ENCODE measurements at regions of chr20 and their contacts with region 1.

Region 1: DNA sequence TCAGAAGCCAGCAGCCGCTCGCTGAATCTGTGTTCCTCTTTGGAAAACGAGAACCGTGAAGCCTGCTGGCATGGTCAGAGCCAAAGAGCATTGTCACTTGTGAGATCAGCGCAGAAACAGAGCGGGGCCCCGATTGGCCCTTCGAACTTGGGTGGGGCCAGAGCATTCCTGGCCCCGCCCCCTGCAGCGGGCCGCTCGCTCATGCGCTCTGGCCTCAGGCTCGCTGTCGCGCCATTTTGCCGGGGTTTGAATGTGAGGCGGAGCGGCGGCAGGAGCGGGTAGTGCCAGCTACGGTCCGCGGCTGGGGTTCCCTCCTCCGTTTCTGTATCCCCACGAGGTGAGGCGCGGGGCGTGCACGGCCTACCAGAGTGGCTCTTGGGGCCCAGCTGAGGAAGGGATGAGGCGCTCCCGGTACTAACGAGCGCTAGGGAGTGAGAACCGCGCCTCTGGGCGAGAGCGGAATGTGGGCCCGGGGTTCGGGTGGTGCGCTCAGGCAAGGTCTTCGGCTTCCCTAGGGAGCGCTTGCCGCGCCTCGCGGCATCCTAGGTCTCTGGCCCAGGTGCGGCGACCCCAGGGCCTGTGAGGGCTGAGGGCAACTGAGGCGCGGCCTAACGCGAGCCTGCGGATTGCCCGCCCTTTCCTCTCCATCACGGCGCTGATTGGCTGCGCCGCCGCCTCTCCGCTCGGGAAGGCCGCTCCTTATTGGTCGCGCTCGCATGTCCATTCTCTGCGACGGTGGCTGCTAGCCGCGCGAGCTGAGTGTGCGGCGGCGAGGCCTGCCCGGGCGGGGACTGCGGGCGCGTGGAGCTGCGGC is at the start of gene CSE1L:
- DNase-seq: peak; percentile 97
- ATAC-seq: peak; percentile 85
- H3K4me3 ChIP-seq: peak within 1 kb of the TSS; percentile 83 to 100 (median 99)
- H3K4me3 Mint-ChIP-seq: peak within 1 kb of the TSS; percentile 96
- H3K27ac ChIP-seq: peak within 1 kb of the TSS; percentile 78 to 97
- H3K27ac Mint-ChIP-seq: peak within 1 kb of the TSS; percentile 98
- H3K4me1 ChIP-seq: peaks cover 14 to 24% of the 10 kb centered on the region in 2 donors
- H3K4me1 Mint-ChIP-seq: peaks cover 28% of the 10 kb centered on the region
- H3K27me3 ChIP-seq: no peaks in the 10 kb centered on the region
- H3K27me3 Mint-ChIP-seq: no peaks in the 10 kb centered on the region
- CTCF ChIP-seq: no peak
- total RNA-seq, gene CSE1L: 38.0 and 38.5 TPM in 2 replicates

Region 2: DNA sequence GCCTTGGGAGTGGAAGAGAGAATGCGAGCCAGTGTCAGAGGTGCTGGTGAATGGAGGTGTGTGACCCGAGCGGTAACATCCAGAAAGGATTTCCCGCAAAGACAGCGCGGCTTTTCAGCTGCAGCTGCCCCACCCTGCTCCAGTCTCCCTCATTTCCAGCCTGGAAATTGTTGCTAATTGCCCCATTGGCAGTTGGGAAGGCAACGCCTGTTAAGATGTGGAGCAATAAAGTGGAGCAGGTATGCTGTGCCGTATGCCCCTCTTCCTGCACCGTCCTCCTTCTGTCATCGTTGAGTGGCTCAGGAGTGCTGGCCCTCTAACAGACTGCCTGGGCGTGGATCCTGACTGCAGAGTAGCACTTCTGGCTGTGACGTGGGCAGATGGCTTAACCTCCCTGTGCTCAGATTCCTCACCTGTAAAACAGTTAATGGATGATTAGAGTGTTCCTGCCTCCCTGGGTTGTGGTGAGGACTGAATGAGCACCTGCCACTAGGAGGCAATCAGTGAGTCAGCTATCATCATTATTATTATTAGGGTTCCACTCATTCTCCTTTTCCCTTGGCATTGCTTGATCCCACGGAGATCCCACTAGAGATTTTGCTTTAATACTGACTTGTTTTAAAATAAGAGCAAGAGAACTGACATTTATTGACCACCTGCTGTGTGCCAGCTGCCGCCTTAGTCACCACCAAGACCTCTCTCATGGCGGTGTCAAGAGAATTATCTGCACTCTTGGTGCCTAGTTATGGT is 113.1 kb before region 1 on chr20:
- CTCF ChIA-PET with region 1: no interaction called
- POLR2A ChIA-PET with region 1: no interaction called
- intact Hi-C with region 1: no loop called
- DNase-seq: no peak
- ATAC-seq: no peak
- H3K4me3 ChIP-seq: no peak overlapping the region
- H3K4me3 Mint-ChIP-seq: no peak overlapping the region
- H3K27ac ChIP-seq: no peak overlapping the region
- H3K27ac Mint-ChIP-seq: no peak overlapping the region
- H3K4me1 ChIP-seq: no peaks in the 10 kb centered on the region
- H3K4me1 Mint-ChIP-seq: peaks cover 11% of the 10 kb centered on the region
- H3K27me3 ChIP-seq: no peaks in the 10 kb centered on the region
- H3K27me3 Mint-ChIP-seq: no peaks in the 10 kb centered on the region
- CTCF ChIP-seq: no peak

Region 3: GRCh38 chr20:49140834-49141233 is 94.5 kb after region 1 on chr20:
- CTCF ChIA-PET with region 1: no interaction called
- POLR2A ChIA-PET with region 1: no interaction called
- intact Hi-C with region 1: no loop called
- DNase-seq: no peak
- ATAC-seq: no peak
- H3K4me3 ChIP-seq: no peak overlapping the region
- H3K4me3 Mint-ChIP-seq: no peak overlapping the region
- H3K27ac ChIP-seq: peak overlapping the region in 1 of 2 donors; percentile 41
- H3K27ac Mint-ChIP-seq: no peak overlapping the region
- H3K4me1 ChIP-seq: peaks cover 0 to 4% of the 10 kb centered on the region in 2 donors
- H3K4me1 Mint-ChIP-seq: peaks cover 9% of the 10 kb centered on the region
- H3K27me3 ChIP-seq: no peaks in the 10 kb centered on the region
- H3K27me3 Mint-ChIP-seq: no peaks in the 10 kb centered on the region
- CTCF ChIP-seq: no peak

Region 4: DNA sequence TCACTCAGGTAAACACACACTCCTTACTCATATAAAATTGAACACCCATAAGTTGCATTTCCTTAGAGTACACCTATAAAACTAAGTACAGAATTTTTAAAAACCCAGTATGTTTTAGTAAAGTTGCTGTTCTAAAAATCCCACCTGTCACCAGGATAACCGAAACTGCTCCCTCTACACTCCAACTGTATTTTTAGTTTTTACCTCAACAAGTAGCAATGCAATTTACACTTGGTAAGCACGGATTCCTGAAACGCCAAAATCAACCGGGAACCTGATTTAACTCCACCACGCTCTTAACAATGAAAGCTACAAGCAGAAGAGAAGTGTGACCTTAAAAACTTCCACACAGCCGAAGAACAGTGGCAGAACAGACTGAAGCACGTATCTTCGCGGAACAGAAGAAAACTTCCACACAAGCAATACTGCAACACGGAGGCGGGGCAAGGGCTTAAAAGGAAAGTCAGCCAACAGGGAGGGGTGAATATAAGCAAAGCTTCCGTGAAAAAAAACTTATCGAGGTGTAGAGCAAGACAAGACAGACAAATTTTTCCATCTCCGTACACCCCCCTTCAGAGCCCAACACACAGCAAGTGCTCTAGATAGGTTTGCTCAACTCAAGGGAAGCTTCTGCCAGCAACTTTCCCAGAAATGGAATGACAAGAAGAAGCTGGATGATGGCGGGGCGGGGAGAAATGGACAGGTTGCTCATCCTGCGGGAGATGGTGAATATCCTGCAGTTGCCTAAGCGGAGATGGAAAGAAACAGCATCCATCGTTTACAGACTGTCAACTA is 140.4 kb after region 1 on chr20:
- CTCF ChIA-PET with region 1: interaction called, 3 read pairs
- POLR2A ChIA-PET with region 1: no interaction called
- intact Hi-C with region 1: loop called (anchors 1 kb)
- DNase-seq: peak; percentile 68
- ATAC-seq: no peak
- H3K4me3 ChIP-seq: peak overlapping the region; percentile 54 to 74 (median 67)
- H3K4me3 Mint-ChIP-seq: peak overlapping the region; percentile 88
- H3K27ac ChIP-seq: peak overlapping the region; percentile 79 to 84
- H3K27ac Mint-ChIP-seq: peak overlapping the region; percentile 74
- H3K4me1 ChIP-seq: peaks cover 14 to 20% of the 10 kb centered on the region in 2 donors
- H3K4me1 Mint-ChIP-seq: peaks cover 46% of the 10 kb centered on the region
- H3K27me3 ChIP-seq: no peaks in the 10 kb centered on the region
- H3K27me3 Mint-ChIP-seq: no peaks in the 10 kb centered on the region
- CTCF ChIP-seq: no peak

Region 5: GRCh38 chr20:50724851-50725721 is 1678.8 kb after region 1 on chr20:
- CTCF ChIA-PET with region 1: no interaction called
- POLR2A ChIA-PET with region 1: no interaction called
- intact Hi-C with region 1: loop called (anchors 5 kb)
- DNase-seq: no peak
- ATAC-seq: no peak
- H3K4me3 ChIP-seq: no peak overlapping the region
- H3K4me3 Mint-ChIP-seq: no peak overlapping the region
- H3K27ac ChIP-seq: no peak overlapping the region
- H3K27ac Mint-ChIP-seq: no peak overlapping the region
- H3K4me1 ChIP-seq: peaks cover under 1% of the 10 kb centered on the region in 2 donors
- H3K4me1 Mint-ChIP-seq: no peaks in the 10 kb centered on the region
- H3K27me3 ChIP-seq: no peaks in the 10 kb centered on the region
- H3K27me3 Mint-ChIP-seq: peaks cover 7% of the 10 kb centered on the region
- CTCF ChIP-seq: no peak

Measured in B cell (primary cell).